AG04450 (cell line): ENCODE measurements at regions of chr4 and their contacts with region 1.

Region 1: GRCh38 chr4:75895744-75896314 is 6.4 kb downstream of the PPEF2 start:
- DNase-seq: no peak
- H3K4me3 ChIP-seq: no peak overlapping the region
- H3K27ac ChIP-seq: no peak overlapping the region
- H3K27me3 ChIP-seq: peaks cover 8% of the 10 kb centered on the region
- CTCF ChIP-seq: peak; percentile 65

Region 2: DNA sequence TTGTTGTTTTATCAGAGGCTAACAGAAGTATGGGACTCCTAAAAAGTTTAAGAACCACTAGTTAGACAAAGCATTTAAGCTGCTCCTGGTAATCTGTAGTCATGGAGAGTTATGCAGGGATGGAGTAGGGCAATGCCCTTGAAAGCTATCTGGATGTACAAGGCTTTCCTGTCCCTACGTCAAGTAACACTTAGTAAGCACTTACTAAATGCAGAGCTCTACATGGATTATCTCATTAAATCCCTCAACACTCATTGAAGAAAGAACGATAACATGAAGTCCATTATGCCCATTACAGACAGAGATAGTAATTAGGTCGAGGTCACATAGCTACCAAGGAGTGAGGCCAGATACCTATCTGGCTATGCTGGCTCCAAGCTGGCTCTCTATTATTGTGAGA is 26.7 kb before region 1 on chr4:
- CTCF ChIA-PET with region 1: interaction called, 11 read pairs
- POLR2A ChIA-PET with region 1: no interaction called
- DNase-seq: no peak
- H3K4me3 ChIP-seq: no peak overlapping the region
- H3K27ac ChIP-seq: no peak overlapping the region
- H3K27me3 ChIP-seq: peaks cover 12% of the 10 kb centered on the region
- CTCF ChIP-seq: no peak

Region 3: DNA sequence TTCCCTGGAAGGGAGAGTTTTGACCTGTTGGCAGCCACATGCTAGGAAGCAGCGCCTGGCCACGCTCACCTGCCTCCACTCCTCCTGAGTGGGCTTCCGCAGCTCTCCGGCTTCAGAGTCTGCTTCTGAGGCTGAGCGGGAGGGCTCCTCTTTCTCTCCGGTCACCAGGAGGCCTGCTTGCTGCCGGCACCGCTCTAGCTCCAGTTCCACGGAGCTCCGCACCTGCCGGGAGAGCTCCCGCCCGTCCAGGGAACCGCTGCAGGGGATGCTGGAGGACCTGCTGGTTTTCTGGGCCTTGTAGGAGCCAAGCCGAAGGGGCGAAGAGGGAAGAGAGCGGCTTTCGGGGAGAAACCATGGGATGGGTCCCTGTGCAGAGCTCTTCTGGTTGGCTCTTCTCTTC is 19.6 kb before region 1 on chr4:
- CTCF ChIA-PET with region 1: interaction called, 22 read pairs
- POLR2A ChIA-PET with region 1: no interaction called
- DNase-seq: no peak
- H3K4me3 ChIP-seq: no peak overlapping the region
- H3K27ac ChIP-seq: no peak overlapping the region
- H3K27me3 ChIP-seq: peaks cover 18% of the 10 kb centered on the region
- CTCF ChIP-seq: no peak

Region 4: GRCh38 chr4:75908555-75908954 is 12.7 kb after region 1 on chr4:
- CTCF ChIA-PET with region 1: interaction called, 27 read pairs
- POLR2A ChIA-PET with region 1: no interaction called
- DNase-seq: no peak
- H3K4me3 ChIP-seq: no peak overlapping the region
- H3K27ac ChIP-seq: no peak overlapping the region
- H3K27me3 ChIP-seq: peaks cover 2% of the 10 kb centered on the region
- CTCF ChIP-seq: no peak

Region 5: GRCh38 chr4:75916091-75916661 is 20.3 kb after region 1 on chr4:
- CTCF ChIA-PET with region 1: interaction called, 34 read pairs
- POLR2A ChIA-PET with region 1: interaction called, 5 read pairs
- DNase-seq: peak; percentile 57
- H3K4me3 ChIP-seq: no peak overlapping the region
- H3K27ac ChIP-seq: peak overlapping the region; percentile 12
- H3K27me3 ChIP-seq: no peaks in the 10 kb centered on the region
- CTCF ChIP-seq: peak; percentile 91

Region 6: DNA sequence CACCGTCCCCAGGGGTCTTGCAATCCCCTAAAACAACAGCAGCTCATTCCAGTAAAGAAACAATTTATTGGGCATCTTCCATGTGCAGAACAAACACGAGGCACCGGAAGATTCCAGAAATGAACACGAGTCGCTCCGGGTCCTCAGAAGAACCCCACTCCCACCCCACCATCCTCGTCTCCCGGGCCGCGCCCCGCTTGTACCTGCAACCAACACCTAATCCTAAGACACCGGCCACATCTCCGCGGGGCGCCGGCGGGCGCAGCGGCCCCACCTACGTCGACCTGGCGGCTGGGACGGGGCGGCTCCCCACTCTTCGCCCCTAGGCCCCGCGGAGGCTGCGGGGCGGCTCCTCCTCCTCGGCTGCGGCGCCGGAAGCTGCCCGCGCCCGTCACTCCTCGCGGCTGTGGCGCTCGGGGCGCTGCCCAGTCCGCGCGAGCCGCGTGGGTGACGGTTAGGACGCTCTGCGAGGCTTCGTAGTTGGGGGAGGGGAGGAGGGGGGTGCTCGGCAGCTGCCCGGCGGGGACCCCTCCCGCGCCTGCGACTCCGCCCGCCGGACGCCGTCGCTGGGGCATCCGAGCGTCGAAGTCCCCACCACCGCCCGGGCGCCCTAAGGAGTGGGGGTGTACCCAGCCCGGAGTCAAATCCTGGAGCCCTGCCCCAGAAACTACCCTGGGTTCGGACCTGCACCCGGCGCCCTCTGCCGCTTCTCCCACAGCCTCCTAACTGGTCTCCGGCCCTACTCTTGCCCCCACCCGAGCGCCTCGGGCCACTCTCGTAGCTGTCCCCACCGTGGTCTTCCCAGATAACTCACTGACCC is 525.1 kb after region 1 on chr4 and contains the start of gene CCDC158:
- CTCF ChIA-PET with region 1: interaction called, 10 read pairs
- POLR2A ChIA-PET with region 1: no interaction called
- DNase-seq: no peak
- H3K4me3 ChIP-seq: peak within 1 kb of the TSS; percentile 44
- H3K27ac ChIP-seq: no peak within 1 kb of the TSS
- H3K27me3 ChIP-seq: peaks cover 29% of the 10 kb centered on the region
- CTCF ChIP-seq: no peak
- polyA plus RNA-seq, gene CCDC158: not detected in 2 replicates